Head of caudate nucleus (tissue), 42 donors: ENCODE measurements at regions of chr1 and their contacts with region 1.

Region 1: GRCh38 chr1:93552741-93553455 is 105.0 kb downstream of the FNBP1L start:
- DNase-seq: peak in 38 of 42 donors; percentile 27 to 93 (median 65)

Region 2: DNA sequence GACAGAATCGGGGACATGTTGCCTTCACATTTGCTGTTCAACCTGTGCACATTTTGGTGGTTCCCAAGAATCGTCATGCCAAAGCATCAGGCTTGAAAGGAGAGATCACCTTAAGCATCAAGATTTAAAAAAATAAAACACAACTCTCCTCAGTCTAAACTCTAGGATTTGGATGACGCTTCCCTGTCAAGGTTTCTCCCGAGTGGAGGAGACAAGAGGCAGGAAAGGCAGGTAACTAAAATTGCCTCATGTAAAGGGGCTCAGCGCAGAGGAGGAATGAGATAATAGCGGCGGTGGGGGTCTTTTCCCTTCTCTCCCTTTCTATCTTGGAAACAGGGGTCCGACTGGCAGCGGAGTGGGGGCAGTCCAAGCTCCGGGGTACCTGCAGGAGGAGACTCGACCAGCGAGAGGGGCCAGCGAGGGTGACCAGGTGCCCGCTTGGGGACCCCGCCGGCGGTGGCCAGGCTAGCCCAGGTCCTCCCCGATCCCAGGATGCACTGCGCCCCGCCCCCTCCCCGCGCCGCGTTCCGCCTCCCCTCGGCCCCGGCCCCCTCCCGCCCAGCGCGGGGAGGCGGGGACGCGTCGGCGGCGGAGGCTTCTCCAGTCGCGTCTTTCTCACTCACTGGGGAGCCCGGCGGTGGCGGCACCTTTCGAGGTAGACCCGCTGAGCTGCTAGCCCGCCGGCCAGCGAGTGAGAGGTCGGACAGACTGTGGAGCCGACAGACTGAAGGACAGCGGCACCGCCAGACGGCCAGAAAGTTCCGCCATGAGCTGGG is 105.2 kb before region 1 on chr1 and contains the start of gene FNBP1L:
- intact Hi-C with region 1: loop called (anchors 10 kb)
- DNase-seq: peak; percentile 34 to 86 (median 76)

Region 3: DNA sequence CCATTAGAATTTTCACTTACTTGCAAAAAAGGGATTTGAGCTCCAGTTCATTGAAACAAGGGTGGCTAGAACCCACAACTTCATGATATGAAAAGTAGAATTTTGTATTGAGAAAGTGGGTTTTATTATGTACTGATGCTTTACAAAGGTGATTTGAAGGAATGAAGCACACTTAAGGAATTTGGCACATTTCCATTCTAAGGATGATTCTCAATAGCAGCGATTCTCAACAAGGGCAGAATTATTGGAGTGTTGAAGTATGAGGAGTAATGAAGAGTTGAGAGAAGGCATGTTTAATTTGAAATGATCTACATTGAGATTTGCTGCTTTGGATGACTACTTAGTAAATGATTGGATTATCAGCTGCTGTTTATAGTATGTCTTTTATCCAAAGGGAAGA is 50.3 kb before region 1 on chr1:
- intact Hi-C with region 1: no loop called
- DNase-seq: no peak

Region 4: DNA sequence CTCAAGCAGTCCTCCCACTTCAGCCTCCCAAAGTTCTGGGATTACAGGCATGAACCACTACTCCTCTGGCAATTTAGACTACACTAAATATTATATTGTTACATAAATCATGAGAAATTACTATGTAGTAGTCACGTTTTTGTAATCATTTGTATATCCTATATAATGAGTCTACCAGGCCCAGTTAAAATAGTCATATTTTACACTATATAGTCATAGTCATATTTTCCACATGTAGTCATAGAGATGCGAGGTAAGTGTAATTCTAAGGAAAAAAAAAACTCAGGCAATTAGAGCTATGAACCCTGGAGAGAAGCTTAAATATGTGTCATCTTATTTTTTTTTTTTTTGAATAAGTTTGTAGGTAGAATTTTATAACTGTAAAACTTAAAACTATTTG is 15.0 kb before region 1 on chr1:
- intact Hi-C with region 1: no loop called
- DNase-seq: no peak

Region 5: GRCh38 chr1:93607814-93608186 is 54.9 kb after region 1 on chr1:
- intact Hi-C with region 1: no loop called
- DNase-seq: peak in 15 of 42 donors; percentile 21 to 73 (median 48)